Activated CD8-positive, alpha-beta T cell treated with anti-CD3 and anti-CD28 coated beads, Interleukin-2, amount 10 ng/mL, durations not matched to agents 7 days and 5 days (primary cell): ENCODE measurements at regions of chr17 and their contacts with region 1.

Region 1: GRCh38 chr17:20800146-20800545 is 220.6 kb downstream of the CDRT15L2 start:
- DNase-seq: no peak
- ATAC-seq: no peak
- H3K4me3 Mint-ChIP-seq: no peak overlapping the region
- H3K27ac Mint-ChIP-seq: no peak overlapping the region
- H3K4me1 Mint-ChIP-seq: peaks cover 33% of the 10 kb centered on the region
- H3K27me3 Mint-ChIP-seq: no peaks in the 10 kb centered on the region

Region 2: DNA sequence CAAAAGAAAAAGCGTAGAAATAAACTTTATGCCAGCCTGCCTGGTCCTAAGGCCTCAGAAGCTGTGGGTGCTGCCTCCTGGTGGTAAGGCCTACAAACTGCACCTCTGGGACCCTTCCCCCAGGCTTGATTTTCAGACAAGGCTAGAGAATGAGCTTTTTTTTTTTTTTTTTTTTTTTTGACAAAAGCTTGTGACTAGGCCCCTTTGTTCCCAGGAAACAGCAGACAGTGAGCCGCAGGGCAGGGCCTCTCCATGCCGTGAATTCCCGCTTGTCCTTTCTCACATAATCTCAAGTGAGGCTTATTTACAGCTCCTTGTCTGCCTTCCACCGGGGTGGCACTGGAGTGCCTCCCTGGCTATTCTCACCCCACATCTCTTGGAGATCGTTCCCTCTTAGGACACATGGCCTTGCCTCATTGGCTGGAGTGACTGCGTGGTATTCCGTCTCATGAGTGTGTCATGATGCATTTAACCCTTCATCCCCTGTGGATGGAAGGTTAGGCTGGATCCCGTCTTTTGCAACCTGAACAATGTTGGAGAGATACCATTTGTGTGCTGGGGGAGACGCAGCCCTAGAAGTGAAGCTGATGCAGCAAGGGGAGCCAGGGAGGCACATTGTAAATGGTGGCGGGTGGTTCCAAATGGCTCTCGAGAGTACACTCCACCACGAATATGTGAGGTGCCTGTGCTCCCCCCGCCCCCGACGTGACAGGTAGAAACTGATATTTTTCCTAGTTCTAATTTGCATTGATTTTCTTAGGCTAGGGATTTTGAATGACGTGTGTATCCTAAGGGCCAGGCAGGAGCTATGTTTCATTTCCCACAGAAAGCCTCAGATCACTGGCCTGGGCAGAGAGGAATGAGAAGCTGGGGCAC is 193.1 kb after region 1 on chr17:
- CTCF ChIA-PET with region 1: interaction called, 11 read pairs
- POLR2A ChIA-PET with region 1: no interaction called
- DNase-seq: peak; percentile 71
- ATAC-seq: peak; percentile 68
- H3K4me3 Mint-ChIP-seq: no peak overlapping the region
- H3K27ac Mint-ChIP-seq: no peak overlapping the region
- H3K4me1 Mint-ChIP-seq: no peaks in the 10 kb centered on the region
- H3K27me3 Mint-ChIP-seq: peaks cover 2% of the 10 kb centered on the region